ENCODE measurements at regions of chr17 and their contacts with region 1.

Region 1: DNA sequence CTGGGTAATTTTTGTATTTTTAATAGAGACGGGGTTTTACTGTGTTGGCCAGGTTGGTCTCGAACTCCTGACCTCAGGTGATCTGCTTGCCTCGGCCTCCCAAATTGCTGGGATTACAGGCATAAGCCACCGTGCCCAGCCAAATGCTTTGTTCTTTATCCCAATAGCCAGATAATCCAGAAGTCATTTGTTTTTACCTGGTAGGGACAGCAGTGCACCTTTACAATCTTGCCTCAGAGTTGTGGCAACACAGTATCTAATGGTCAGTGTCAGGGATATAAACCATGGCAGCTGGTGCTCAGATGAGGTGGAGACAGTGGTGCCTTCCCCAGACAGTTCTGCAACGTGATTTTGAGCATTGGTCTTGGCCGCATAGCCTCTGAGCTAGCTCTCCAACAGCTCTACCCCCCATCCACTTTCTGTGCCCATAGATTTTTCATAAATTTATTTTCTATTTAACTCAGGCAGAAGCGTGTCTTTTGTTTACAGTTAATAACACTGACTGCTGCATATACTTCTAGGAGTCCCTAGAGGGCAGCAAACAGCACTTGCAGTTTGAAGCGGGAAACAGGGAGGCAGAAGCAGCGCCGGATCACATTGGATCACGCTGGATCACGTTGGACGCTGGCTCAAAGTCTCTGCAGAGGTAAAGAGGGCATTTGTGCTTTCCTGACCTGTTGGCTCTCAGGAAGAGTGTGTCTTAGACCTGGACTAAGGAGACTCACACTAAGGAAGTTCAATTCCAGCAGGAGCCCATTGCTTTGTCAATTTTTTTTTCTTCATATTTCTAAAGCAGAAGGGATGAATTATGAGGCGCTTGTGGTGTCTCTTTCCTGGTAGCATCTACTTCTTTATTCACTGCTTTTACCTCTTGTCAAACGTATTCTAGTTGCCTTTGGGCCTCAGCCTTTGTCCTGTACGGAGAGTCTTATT is 5.1 kb upstream of the GGT6 start:
- DNase-seq: peak; percentile 39
- H3K4me3 Mint-ChIP-seq: no peak overlapping the region
- H3K27ac Mint-ChIP-seq: peak overlapping the region; percentile 33
- H3K4me1 Mint-ChIP-seq: peaks cover 40% of the 10 kb centered on the region
- H3K27me3 Mint-ChIP-seq: peaks cover 7% of the 10 kb centered on the region

Region 2: DNA sequence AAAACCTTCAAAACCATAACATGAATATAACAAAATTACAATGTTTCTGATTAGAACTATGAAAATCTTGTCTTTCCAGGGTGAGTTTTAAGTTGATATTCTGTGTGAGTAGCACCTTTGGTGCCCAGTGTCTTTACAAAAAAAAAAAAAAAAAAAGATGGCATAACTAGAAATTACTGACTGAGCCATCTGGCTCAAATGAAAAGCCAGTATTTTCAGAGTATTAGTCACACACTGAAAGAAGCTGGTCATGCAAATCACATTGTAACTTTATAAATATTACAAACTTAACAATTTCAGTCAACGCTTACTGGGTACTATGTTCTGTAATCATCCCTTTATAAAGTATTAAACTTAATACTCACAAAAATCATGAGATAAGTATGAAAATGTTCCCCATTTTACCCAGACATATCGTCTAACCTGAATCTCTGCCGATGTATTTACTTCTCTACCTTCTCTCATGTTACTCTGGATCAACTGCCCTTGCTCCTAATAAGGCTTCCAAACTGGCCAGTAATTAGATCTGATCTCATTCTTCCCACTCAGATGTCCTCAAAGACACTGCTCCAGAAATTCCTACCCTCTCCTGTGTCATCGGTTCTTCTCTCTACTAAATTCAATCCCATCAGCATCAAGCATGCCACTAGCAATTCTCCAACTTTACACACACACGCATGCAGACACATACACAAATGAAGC is 224.4 kb before region 1 on chr17:
- intact Hi-C with region 1: no loop called
- DNase-seq: no peak
- H3K4me3 Mint-ChIP-seq: no peak overlapping the region
- H3K27ac Mint-ChIP-seq: no peak overlapping the region
- H3K4me1 Mint-ChIP-seq: peaks cover 19% of the 10 kb centered on the region
- H3K27me3 Mint-ChIP-seq: no peaks in the 10 kb centered on the region

Region 3: DNA sequence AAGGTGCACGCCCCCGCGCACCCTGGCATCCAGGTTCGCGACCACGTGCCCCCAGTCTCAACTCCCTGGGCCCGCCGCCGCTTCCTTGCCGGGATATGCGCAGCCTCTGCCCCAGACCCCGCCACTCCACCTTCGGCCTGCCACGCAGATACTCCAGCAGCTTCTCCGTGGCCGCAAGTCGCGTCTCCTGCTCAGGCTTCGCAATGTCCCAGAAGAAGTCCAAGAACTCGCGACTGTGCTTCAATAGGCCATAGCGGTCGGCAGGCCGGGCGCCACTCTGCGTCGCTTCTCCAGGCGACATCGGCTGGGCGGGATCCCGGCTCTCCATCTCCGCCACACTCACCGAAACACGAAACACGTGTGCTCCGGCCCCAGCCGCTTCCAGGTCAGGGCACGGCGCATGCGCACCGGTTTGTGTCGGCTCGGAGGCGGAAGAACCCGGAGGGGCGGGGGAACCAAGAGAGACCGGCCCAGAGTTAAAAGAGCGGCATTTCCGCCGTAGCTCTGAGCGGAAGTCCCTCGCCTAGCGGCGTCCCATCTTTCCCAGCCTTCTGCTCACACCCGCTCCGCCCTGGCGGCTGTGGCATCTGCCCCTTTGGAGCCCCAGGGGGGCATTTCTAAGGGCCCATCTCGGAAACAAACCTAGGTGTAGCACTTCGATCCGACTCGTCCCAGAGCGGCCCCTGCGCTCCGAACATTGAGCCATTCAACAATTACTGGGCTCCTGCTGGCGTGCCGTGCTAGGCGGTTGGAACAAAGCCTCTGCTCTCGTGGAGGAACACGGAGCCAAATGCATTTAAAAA is 10.3 kb before region 1 on chr17 and contains the start of gene MYBBP1A:
- intact Hi-C with region 1: loop called (anchors 1 kb)
- DNase-seq: peak; percentile 96
- H3K4me3 Mint-ChIP-seq: peak within 1 kb of the TSS; percentile 84
- H3K27ac Mint-ChIP-seq: peak within 1 kb of the TSS; percentile 91
- H3K4me1 Mint-ChIP-seq: peaks cover 14% of the 10 kb centered on the region
- H3K27me3 Mint-ChIP-seq: no peaks in the 10 kb centered on the region
- total RNA-seq, gene MYBBP1A: 136 and 137 TPM in 2 replicates

Region 4: DNA sequence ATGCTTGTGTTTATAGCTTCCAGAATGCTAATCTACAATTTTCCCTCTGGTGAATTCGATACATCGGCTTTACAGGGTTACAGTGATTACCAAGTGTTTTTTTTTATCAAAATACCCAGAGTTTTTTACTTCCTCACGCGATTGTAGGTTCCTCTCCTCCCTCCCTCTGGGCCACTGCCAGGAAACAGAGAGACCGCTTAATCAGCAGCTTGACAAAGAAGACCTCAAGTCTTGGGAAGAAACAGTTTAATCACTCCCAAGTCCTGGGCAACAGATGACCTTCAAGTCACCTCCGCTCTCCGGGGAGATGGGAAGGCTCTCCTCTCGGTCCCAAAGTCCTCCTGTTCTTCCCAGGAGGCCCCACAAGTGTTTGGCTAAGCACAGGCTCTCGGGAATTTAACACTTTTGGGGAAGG is 42.3 kb after region 1 on chr17:
- intact Hi-C with region 1: no loop called
- DNase-seq: no peak
- H3K4me3 Mint-ChIP-seq: no peak overlapping the region
- H3K27ac Mint-ChIP-seq: no peak overlapping the region
- H3K4me1 Mint-ChIP-seq: no peaks in the 10 kb centered on the region
- H3K27me3 Mint-ChIP-seq: peaks cover 28% of the 10 kb centered on the region

Region 5: GRCh38 chr17:4625181-4625617 is 59.7 kb after region 1 on chr17:
- intact Hi-C with region 1: loop called (anchors 1 kb)
- DNase-seq: no peak
- H3K4me3 Mint-ChIP-seq: no peak overlapping the region
- H3K27ac Mint-ChIP-seq: no peak overlapping the region
- H3K4me1 Mint-ChIP-seq: no peaks in the 10 kb centered on the region
- H3K27me3 Mint-ChIP-seq: peaks cover 36% of the 10 kb centered on the region

Region 6: GRCh38 chr17:4759776-4760236 is 194.3 kb after region 1 on chr17:
- intact Hi-C with region 1: no loop called
- DNase-seq: no peak
- H3K4me3 Mint-ChIP-seq: no peak overlapping the region
- H3K27ac Mint-ChIP-seq: no peak overlapping the region
- H3K4me1 Mint-ChIP-seq: no peaks in the 10 kb centered on the region
- H3K27me3 Mint-ChIP-seq: peaks cover 21% of the 10 kb centered on the region

Region 7: GRCh38 chr17:4789901-4790704 is 224.6 kb after region 1 on chr17:
- intact Hi-C with region 1: loop called (anchors 10 kb)
- DNase-seq: peak; percentile 82
- H3K4me3 Mint-ChIP-seq: peak overlapping the region; percentile 90
- H3K27ac Mint-ChIP-seq: peak overlapping the region; percentile 94
- H3K4me1 Mint-ChIP-seq: peaks cover 21% of the 10 kb centered on the region
- H3K27me3 Mint-ChIP-seq: peaks cover 39% of the 10 kb centered on the region

Region 8: GRCh38 chr17:4891411-4892342 is 326.2 kb after region 1 on chr17:
- intact Hi-C with region 1: loop called (anchors 1 kb)
- DNase-seq: no peak
- H3K4me3 Mint-ChIP-seq: no peak overlapping the region
- H3K27ac Mint-ChIP-seq: no peak overlapping the region
- H3K4me1 Mint-ChIP-seq: peaks cover 1% of the 10 kb centered on the region
- H3K27me3 Mint-ChIP-seq: no peaks in the 10 kb centered on the region